ENCODE measurements at regions of chr12 and their contacts with region 1.

Region 1: DNA sequence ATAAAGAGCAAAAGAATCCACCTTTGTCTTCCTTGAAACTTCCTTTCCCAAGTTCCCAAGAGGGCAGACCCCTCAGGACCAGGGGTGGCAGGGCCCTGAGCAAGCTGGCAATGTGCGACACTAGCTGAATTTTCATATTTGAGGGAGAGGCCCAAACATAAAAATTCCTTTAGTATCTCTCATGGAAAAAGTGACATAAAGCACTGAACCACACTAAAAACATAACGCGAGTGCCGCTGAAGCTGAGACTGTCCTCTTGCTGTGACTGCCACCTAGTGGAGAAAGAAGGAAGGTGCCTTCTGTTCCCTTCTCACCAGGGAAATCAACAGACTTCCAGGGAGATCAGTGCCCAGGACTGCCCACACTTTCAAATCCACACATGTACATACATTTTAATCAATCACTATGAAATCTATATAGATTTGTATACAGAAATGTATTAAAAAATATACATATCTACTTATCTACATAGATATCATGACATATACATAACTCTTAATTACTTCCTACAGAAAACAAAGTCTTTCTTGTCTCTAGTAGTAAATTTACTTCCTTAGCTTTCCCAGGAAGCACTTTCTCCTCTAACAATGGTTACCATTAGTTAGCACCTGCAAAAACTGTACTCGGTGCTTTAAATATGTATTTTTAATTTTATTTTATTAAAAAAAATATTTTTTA is 53.8 kb downstream of the SSH1 start:
- DNase-seq: peak; percentile 79
- ATAC-seq: peak; percentile 92
- H3K4me3 Mint-ChIP-seq: no peak overlapping the region
- H3K27ac Mint-ChIP-seq: peak overlapping the region; percentile 73
- H3K4me1 Mint-ChIP-seq: peaks cover 7% of the 10 kb centered on the region
- H3K27me3 Mint-ChIP-seq: no peaks in the 10 kb centered on the region
- CTCF ChIP-seq: peak; percentile 99

Region 2: GRCh38 chr12:108562348-108563135 is 241.0 kb before region 1 on chr12 and contains the start of gene ISCU:
- CTCF ChIA-PET with region 1: interaction called, 26 read pairs
- POLR2A ChIA-PET with region 1: interaction called, 4 read pairs
- intact Hi-C with region 1: loop called (anchors 5 kb)
- DNase-seq: peak; percentile 97
- ATAC-seq: peak; percentile 76
- H3K4me3 Mint-ChIP-seq: peak within 1 kb of the TSS; percentile 99
- H3K27ac Mint-ChIP-seq: peak within 1 kb of the TSS; percentile 100
- H3K4me1 Mint-ChIP-seq: peaks cover 55% of the 10 kb centered on the region
- H3K27me3 Mint-ChIP-seq: no peaks in the 10 kb centered on the region
- CTCF ChIP-seq: no peak
- total RNA-seq, gene ISCU: 69.4 to 70.5 TPM

Region 3: GRCh38 chr12:108685469-108686260 is 117.9 kb before region 1 on chr12:
- CTCF ChIA-PET with region 1: interaction called, 30 read pairs
- POLR2A ChIA-PET with region 1: no interaction called
- intact Hi-C with region 1: no loop called
- DNase-seq: no peak
- ATAC-seq: no peak
- H3K4me3 Mint-ChIP-seq: no peak overlapping the region
- H3K27ac Mint-ChIP-seq: no peak overlapping the region
- H3K4me1 Mint-ChIP-seq: peaks cover 36% of the 10 kb centered on the region
- H3K27me3 Mint-ChIP-seq: no peaks in the 10 kb centered on the region
- CTCF ChIP-seq: no peak

Region 4: GRCh38 chr12:108750526-108751402 is 52.8 kb before region 1 on chr12:
- CTCF ChIA-PET with region 1: interaction called, 16 read pairs
- POLR2A ChIA-PET with region 1: no interaction called
- intact Hi-C with region 1: no loop called
- DNase-seq: no peak
- ATAC-seq: no peak
- H3K4me3 Mint-ChIP-seq: no peak overlapping the region
- H3K27ac Mint-ChIP-seq: no peak overlapping the region
- H3K4me1 Mint-ChIP-seq: no peaks in the 10 kb centered on the region
- H3K27me3 Mint-ChIP-seq: no peaks in the 10 kb centered on the region
- CTCF ChIP-seq: no peak

Region 5: GRCh38 chr12:108838194-108839017 is 34.8 kb after region 1 on chr12:
- CTCF ChIA-PET with region 1: interaction called, 15 read pairs
- POLR2A ChIA-PET with region 1: no interaction called
- intact Hi-C with region 1: no loop called
- DNase-seq: peak; percentile 90
- ATAC-seq: peak; percentile 94
- H3K4me3 Mint-ChIP-seq: peak overlapping the region; percentile 65
- H3K27ac Mint-ChIP-seq: peak overlapping the region; percentile 91
- H3K4me1 Mint-ChIP-seq: peaks cover 52% of the 10 kb centered on the region
- H3K27me3 Mint-ChIP-seq: no peaks in the 10 kb centered on the region
- CTCF ChIP-seq: no peak

Region 6: GRCh38 chr12:108861878-108862587 is 58.5 kb after region 1 on chr12:
- CTCF ChIA-PET with region 1: no interaction called
- POLR2A ChIA-PET with region 1: no interaction called
- intact Hi-C with region 1: no loop called
- DNase-seq: no peak
- ATAC-seq: no peak
- H3K4me3 Mint-ChIP-seq: no peak overlapping the region
- H3K27ac Mint-ChIP-seq: no peak overlapping the region
- H3K4me1 Mint-ChIP-seq: peaks cover 12% of the 10 kb centered on the region
- H3K27me3 Mint-ChIP-seq: peaks cover 2% of the 10 kb centered on the region
- CTCF ChIP-seq: no peak

Measured in activated CD8-positive, alpha-beta T cell treated with anti-CD3 and anti-CD28 coated beads for 36 hours (primary cell).